ENCODE measurements at regions of chr2 and their contacts with region 1.

Region 1: GRCh38 chr2:222024932-222025880 is 273.6 kb downstream of the PAX3 start:
- DNase-seq: no peak
- ATAC-seq: peak; percentile 59
- H3K4me3 Mint-ChIP-seq: peak overlapping the region; percentile 42
- H3K27ac Mint-ChIP-seq: no peak overlapping the region
- H3K4me1 Mint-ChIP-seq: peaks cover 19% of the 10 kb centered on the region
- H3K27me3 Mint-ChIP-seq: peaks cover 70% of the 10 kb centered on the region
- CTCF ChIP-seq: peak; percentile 27; the same call in 1 of the 2 replicates

Region 2: GRCh38 chr2:222038067-222038802 is 13.0 kb after region 1 on chr2:
- CTCF ChIA-PET with region 1: interaction called, 45 read pairs
- POLR2A ChIA-PET with region 1: no interaction called
- DNase-seq: no peak
- ATAC-seq: no peak
- H3K4me3 Mint-ChIP-seq: no peak overlapping the region
- H3K27ac Mint-ChIP-seq: no peak overlapping the region
- H3K4me1 Mint-ChIP-seq: 0 out of 2 replicates have a peak, but pooled peaks cover 2% of the 10 kb centered on the region
- H3K27me3 Mint-ChIP-seq: peaks cover 12% of the 10 kb centered on the region
- CTCF ChIP-seq: no peak

Region 3: GRCh38 chr2:222290736-222291484 is 265.7 kb after region 1 on chr2:
- CTCF ChIA-PET with region 1: interaction called, 13 read pairs
- POLR2A ChIA-PET with region 1: no interaction called
- DNase-seq: peak; percentile 90
- ATAC-seq: peak; percentile 88
- H3K4me3 Mint-ChIP-seq: peak overlapping the region; percentile 64
- H3K27ac Mint-ChIP-seq: no peak overlapping the region; the same call in 1 of the 2 replicates
- H3K4me1 Mint-ChIP-seq: peaks cover 60% of the 10 kb centered on the region
- H3K27me3 Mint-ChIP-seq: peaks cover 99% of the 10 kb centered on the region
- CTCF ChIP-seq: no peak

Region 4: GRCh38 chr2:222561817-222562645 is 536.8 kb after region 1 on chr2:
- CTCF ChIA-PET with region 1: interaction called, 28 read pairs
- POLR2A ChIA-PET with region 1: no interaction called
- DNase-seq: peak; percentile 56
- ATAC-seq: peak; percentile 93
- H3K4me3 Mint-ChIP-seq: no peak overlapping the region
- H3K27ac Mint-ChIP-seq: no peak overlapping the region
- H3K4me1 Mint-ChIP-seq: no peaks in the 10 kb centered on the region
- H3K27me3 Mint-ChIP-seq: peaks cover 15% of the 10 kb centered on the region
- CTCF ChIP-seq: peak; percentile 76

Measured in WTC11 (cell line).